B cell (primary cell): ENCODE measurements at regions of chr7 and their contacts with region 1.

Region 1: GRCh38 chr7:111115966-111116365 is 25.0 kb downstream of the LRRN3 start:
- DNase-seq: no peak
- ATAC-seq: no peak
- H3K4me3 ChIP-seq: no peak overlapping the region
- H3K4me3 Mint-ChIP-seq: no peak overlapping the region
- H3K27ac ChIP-seq: no peak overlapping the region
- H3K27ac Mint-ChIP-seq: no peak overlapping the region
- H3K4me1 ChIP-seq: no peaks in the 10 kb centered on the region
- H3K4me1 Mint-ChIP-seq: no peaks in the 10 kb centered on the region
- H3K27me3 ChIP-seq: no peaks in the 10 kb centered on the region
- H3K27me3 Mint-ChIP-seq: no peaks in the 10 kb centered on the region
- CTCF ChIP-seq: no peak

Region 2: GRCh38 chr7:111150709-111151108 is 34.7 kb after region 1 on chr7:
- CTCF ChIA-PET with region 1: no interaction called
- POLR2A ChIA-PET with region 1: no interaction called
- intact Hi-C with region 1: loop called (anchors 5 kb)
- DNase-seq: no peak
- ATAC-seq: no peak
- H3K4me3 ChIP-seq: no peak overlapping the region
- H3K4me3 Mint-ChIP-seq: no peak overlapping the region
- H3K27ac ChIP-seq: no peak overlapping the region
- H3K27ac Mint-ChIP-seq: no peak overlapping the region
- H3K4me1 ChIP-seq: no peaks in the 10 kb centered on the region
- H3K4me1 Mint-ChIP-seq: peaks cover 2% of the 10 kb centered on the region
- H3K27me3 ChIP-seq: no peaks in the 10 kb centered on the region
- H3K27me3 Mint-ChIP-seq: no peaks in the 10 kb centered on the region
- CTCF ChIP-seq: no peak